ENCODE measurements at regions of chr5 and their contacts with region 1.

Region 1: DNA sequence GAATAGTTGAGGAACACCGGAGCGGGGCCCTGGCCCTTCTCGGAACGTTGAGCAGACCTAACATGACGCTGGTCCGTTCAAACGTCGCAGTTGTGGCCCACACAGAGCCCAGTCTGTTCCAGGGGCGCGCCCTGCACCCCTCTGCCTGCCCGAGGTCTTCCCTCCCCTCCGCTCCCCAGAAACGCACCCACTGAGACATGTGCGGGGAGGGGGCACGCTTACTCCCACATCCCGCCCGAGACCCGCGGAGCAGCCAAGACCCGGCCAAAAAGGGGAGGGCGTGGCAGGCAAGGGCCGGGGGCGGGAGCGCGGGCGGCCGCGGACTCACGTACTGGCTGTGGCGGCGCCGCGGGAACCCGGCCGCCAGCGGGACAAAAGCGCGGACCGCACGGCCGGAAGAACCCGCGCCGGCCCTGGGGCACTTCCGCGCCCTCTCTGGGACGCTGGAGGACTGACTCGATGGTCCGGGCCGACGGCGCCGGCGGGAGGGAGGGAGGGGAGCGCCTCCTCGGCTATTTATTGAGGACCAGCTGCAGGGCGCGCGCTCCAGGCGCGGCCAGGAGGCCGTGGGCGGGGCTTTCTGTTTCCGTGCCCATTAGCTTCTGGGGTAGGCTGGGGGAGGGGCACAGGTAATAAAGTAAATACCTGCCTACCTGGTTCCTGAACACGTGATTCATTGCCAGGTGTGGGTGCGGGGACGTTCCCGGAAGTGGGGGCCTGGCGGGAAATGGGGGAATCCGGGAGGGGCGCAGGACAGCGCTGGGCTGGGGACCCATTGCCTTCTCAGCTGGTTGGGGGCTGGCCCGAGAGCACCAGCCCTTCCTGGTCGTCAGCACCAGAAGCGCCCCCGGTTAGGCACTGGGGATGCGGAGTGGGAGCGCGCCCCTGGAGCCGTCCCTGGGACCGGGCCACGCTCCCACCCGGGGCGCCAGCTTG is at the start of gene ZFP62:
- DNase-seq: peak; percentile 95 to 98 (median 96)
- H3K4me3 ChIP-seq: peak within 1 kb of the TSS; percentile 91 to 92 (median 91)
- H3K27ac ChIP-seq: peak within 1 kb of the TSS; percentile 86
- H3K4me1 ChIP-seq: peaks cover 0 to 4% (median 0%) of the 10 kb centered on the region in 3 donors
- H3K27me3 ChIP-seq: no peaks in the 10 kb centered on the region
- CTCF ChIP-seq: no peak
- total RNA-seq, gene ZFP62: 30.7 TPM

Region 2: GRCh38 chr5:180784497-180785097 is 76.6 kb before region 1 on chr5:
- intact Hi-C with region 1: loop called (anchors 10 kb)
- DNase-seq: peak; percentile 78 to 92 (median 83)
- H3K4me3 ChIP-seq: no peak overlapping the region
- H3K27ac ChIP-seq: no peak overlapping the region
- H3K4me1 ChIP-seq: peaks cover 0 to 18% (median 14%) of the 10 kb centered on the region in 3 donors
- H3K27me3 ChIP-seq: no peaks in the 10 kb centered on the region
- CTCF ChIP-seq: peak; percentile 86

Measured in kidney (tissue), 22 donors.